Heart right ventricle (tissue), 16 donors: ENCODE measurements at regions of chr1 and their contacts with region 1.

Region 1: DNA sequence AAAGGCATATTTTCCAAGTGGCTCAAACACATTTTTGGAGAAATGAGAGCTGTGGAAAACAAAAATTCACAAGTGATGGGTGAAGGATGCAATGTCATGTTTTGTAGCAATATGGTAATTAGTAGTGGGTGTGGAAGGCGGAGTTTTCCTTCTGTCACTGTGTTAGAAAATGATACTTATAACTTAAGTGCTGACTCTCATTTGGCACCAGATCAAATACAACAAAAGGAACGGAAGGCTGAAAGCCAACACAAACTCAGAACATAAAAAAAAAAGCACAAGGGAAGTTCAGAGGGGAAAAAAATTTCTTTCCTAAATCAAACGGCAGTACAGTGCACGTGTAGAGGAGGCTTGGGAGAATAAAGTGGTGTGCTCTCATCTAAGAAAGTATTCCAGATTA is at the start of gene TNFSF18:
- DNase-seq: peak in 1 of 2 donors; percentile 40
- ATAC-seq: peak in 7 of 8 donors; percentile 61 to 95 (median 79)
- H3K4me3 ChIP-seq: no peak within 1 kb of the TSS
- H3K27ac ChIP-seq: no peak within 1 kb of the TSS
- H3K4me1 ChIP-seq: peaks cover 0 to 45% (median 26%) of the 10 kb centered on the region in 9 donors
- H3K27me3 ChIP-seq: no peaks in the 10 kb centered on the region
- CTCF ChIP-seq: no peak
- total RNA-seq, gene TNFSF18: 0.13 to 1.4 (median 0.22) TPM in 4 of 10 donors, not detected in the others

Region 2: GRCh38 chr1:172940174-172940855 is 110.5 kb before region 1 on chr1:
- intact Hi-C with region 1: loop called in 1 of 10 experiments (anchors 5 kb)
- DNase-seq: no peak
- ATAC-seq: no peak
- H3K4me3 ChIP-seq: no peak overlapping the region
- H3K27ac ChIP-seq: no peak overlapping the region
- H3K4me1 ChIP-seq: peaks cover 0 to 7% (median 0%) of the 10 kb centered on the region in 9 donors
- H3K27me3 ChIP-seq: no peaks in the 10 kb centered on the region
- CTCF ChIP-seq: no peak